ENCODE measurements at regions of chr16 and their contacts with region 1.

Region 1: GRCh38 chr16:578870-579405 is 9.2 kb downstream of the PIGQ start:
- DNase-seq: peak; percentile 73 to 88 (median 83)
- H3K4me3 ChIP-seq: no peak overlapping the region
- H3K27ac ChIP-seq: no peak overlapping the region
- H3K4me1 ChIP-seq: no peaks in the 10 kb centered on the region
- H3K27me3 ChIP-seq: no peaks in the 10 kb centered on the region
- CTCF ChIP-seq: peak; percentile 71 to 95 (median 86)
- POLR2A ChIP-seq: no peak

Region 2: DNA sequence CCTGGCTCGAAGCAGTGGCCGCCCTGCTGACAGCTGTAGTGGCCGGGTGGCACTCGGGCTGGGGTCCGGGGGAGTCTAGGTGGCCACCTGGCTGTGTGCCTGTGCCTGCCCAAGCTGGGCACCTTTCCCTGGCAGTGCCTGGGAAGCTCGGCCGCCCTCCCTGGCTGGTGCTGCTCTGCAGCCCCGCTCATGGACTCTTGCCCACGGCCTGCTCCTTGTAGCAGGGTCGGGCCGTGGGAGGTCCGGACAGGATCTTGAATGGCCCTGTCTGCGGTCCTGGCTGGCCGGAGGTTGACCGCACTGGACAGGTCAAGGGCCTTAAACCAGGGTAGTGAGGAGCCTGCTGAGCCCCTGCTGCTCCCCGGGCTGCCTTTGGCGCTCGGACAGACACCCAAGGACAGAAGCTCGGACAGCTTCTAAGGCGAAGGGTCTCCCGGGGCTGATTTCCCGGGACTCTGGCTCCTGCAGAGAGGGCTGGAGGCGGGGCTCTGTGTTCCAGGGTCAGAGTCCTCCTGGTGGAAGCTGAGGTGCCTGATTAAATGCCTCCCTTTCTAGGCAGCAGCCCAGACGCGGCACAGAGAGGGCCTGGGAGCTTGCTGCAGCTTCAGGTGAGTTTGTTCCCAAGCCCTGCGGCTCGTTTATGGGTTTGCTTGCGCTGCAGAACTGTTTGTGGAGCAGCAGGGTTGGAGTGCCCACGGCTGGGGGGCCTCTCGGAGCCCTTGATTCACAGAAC is 45.4 kb before region 1 on chr16:
- intact Hi-C with region 1: no loop called
- DNase-seq: peak in 6 of 7 donors; percentile 57 to 77 (median 67)
- H3K4me3 ChIP-seq: no peak overlapping the region
- H3K27ac ChIP-seq: peak overlapping the region in 3 of 5 donors; percentile 17 to 44 (median 39)
- H3K4me1 ChIP-seq: peaks cover 20 to 39% of the 10 kb centered on the region in 2 donors
- H3K27me3 ChIP-seq: no peaks in the 10 kb centered on the region
- CTCF ChIP-seq: peak in 1 of 6 experiments; percentile 17
- POLR2A ChIP-seq: peak in 1 of 2 donors; percentile 31

Region 3: DNA sequence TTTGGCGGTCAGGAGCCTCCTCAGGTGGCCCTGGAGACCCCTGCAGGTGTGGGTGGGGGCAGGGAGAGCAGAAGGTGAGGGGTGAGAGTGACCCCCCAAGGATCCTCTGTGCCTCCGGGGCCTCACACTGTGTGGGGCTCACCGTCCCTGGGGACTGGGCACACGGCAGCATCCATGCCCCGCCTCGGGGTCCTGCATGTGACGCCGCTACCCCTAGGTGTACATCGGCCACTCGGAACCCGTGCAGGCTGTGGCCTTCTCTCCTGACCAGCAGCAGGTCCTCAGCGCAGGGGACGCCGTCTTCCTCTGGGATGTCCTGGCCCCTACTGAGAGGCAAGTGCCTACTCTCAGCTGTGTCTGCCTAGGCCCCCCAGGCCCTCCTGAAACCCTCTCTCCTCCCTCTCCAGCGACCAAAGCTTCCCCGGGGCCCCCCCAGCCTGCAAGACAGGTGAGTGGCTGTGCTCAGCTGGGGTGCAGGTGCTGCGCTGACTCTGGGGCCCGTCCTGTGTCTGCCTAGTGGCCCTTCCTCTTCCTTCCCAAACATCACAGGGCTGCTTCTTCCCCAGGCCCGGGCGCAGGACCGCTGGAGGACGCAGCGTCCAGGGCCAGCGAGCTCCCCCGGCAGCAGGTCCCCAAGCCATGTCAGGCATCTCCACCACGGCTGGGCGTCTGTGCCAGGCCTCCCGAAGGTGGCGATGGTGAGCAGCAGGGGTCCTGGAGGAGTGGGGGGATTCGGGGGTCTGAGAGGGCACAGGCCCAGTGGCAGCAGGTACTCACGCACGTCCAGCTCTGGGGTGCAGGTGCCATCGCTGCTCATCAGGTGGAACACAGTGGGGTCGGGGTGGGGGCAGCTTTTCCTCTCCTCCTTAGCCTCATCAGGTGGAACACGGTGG is 80.0 kb after region 1 on chr16:
- intact Hi-C with region 1: loop called in 1 of 2 experiments (anchors 5 kb)
- DNase-seq: no peak
- H3K4me3 ChIP-seq: no peak overlapping the region
- H3K27ac ChIP-seq: no peak overlapping the region
- H3K4me1 ChIP-seq: peaks cover 12 to 13% of the 10 kb centered on the region in 2 donors
- H3K27me3 ChIP-seq: no peaks in the 10 kb centered on the region
- CTCF ChIP-seq: no peak
- POLR2A ChIP-seq: no peak

Measured in adrenal gland (tissue), 19 donors.